GM13976 (cell line): ENCODE measurements at regions of chr3 and their contacts with region 1.

Region 1: DNA sequence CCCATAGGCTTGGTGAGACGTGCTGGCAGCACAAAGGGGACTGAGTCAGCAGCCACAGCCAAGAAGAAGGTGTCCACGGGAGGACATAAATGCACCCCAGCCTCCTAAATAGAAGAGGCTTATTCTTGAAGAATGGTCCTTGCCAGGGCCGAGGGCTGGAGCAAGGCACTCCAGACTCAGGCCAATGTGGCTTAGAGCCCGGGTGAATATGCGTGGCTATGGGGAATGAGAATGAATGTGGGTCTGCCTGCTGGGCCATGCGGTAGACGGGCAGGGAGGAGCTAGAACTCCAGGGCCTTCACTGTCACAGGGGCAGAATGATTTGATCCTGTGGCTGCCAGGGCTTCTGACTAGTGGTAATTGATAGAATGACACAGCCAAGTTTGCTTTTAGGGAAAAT is 34.0 kb downstream of the DHX30 start:
- DNase-seq: no peak
- CTCF ChIP-seq: no peak

Region 2: GRCh38 chr3:47989981-47990440 is 153.0 kb after region 1 on chr3:
- in situ Hi-C with region 1: loop called (anchors 10 kb)
- DNase-seq: peak; percentile 69
- CTCF ChIP-seq: peak; percentile 93